ENCODE measurements at regions of chr11 and their contacts with region 1.

Region 1: DNA sequence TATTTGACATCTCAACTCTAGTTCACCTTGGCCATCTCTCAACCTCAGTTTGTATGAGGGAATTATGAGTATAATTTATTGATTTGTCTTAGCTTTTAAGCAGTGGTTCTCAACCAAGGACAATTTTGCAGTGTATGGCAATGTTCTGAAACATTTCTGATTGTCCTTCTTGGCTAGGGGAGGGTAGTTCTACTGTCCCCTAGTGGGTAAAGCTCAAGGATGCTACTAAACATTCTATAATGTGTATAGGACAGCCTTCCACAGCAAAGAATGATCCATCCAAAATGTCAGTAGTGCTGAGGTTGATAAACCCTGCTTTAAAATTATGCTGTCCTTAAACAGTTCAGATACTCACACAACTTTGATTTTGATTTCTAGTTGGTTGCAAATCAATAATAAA is 78.1 kb upstream of the ALKBH3 start:
- DNase-seq: peak in 1 of 2 experiments; percentile 22
- H3K4me3 ChIP-seq: no peak overlapping the region
- H3K4me3 Mint-ChIP-seq: no peak overlapping the region
- H3K27ac Mint-ChIP-seq: no peak overlapping the region
- H3K4me1 ChIP-seq: no peaks in the 10 kb centered on the region
- H3K4me1 Mint-ChIP-seq: no peaks in the 10 kb centered on the region
- H3K27me3 ChIP-seq: no peaks in the 10 kb centered on the region
- H3K27me3 Mint-ChIP-seq: no peaks in the 10 kb centered on the region
- CTCF ChIP-seq: peak; percentile 37 to 63

Region 2: GRCh38 chr11:43579171-43579918 is 223.2 kb before region 1 on chr11:
- CTCF ChIA-PET with region 1: no interaction called
- POLR2A ChIA-PET with region 1: no interaction called
- intact Hi-C with region 1: loop called (anchors 5 kb)
- DNase-seq: peak in 1 of 2 experiments; percentile 45
- H3K4me3 ChIP-seq: peak overlapping the region; percentile 60
- H3K4me3 Mint-ChIP-seq: peak overlapping the region; percentile 75
- H3K27ac Mint-ChIP-seq: no peak overlapping the region
- H3K4me1 ChIP-seq: no peaks in the 10 kb centered on the region; the same call in 1 of the 2 replicates
- H3K4me1 Mint-ChIP-seq: peaks cover 27% of the 10 kb centered on the region
- H3K27me3 ChIP-seq: peaks cover 6% of the 10 kb centered on the region
- H3K27me3 Mint-ChIP-seq: peaks cover 63% of the 10 kb centered on the region
- CTCF ChIP-seq: peak; percentile 40 to 65

Region 3: GRCh38 chr11:43602670-43603069 is 199.8 kb before region 1 on chr11:
- CTCF ChIA-PET with region 1: interaction called, 3 read pairs
- POLR2A ChIA-PET with region 1: interaction called, 12 read pairs
- intact Hi-C with region 1: no loop called
- DNase-seq: no peak
- H3K4me3 ChIP-seq: no peak overlapping the region
- H3K4me3 Mint-ChIP-seq: no peak overlapping the region
- H3K27ac Mint-ChIP-seq: no peak overlapping the region
- H3K4me1 ChIP-seq: no peaks in the 10 kb centered on the region
- H3K4me1 Mint-ChIP-seq: no peaks in the 10 kb centered on the region
- H3K27me3 ChIP-seq: no peaks in the 10 kb centered on the region
- H3K27me3 Mint-ChIP-seq: peaks cover 14% of the 10 kb centered on the region
- CTCF ChIP-seq: no peak

Region 4: DNA sequence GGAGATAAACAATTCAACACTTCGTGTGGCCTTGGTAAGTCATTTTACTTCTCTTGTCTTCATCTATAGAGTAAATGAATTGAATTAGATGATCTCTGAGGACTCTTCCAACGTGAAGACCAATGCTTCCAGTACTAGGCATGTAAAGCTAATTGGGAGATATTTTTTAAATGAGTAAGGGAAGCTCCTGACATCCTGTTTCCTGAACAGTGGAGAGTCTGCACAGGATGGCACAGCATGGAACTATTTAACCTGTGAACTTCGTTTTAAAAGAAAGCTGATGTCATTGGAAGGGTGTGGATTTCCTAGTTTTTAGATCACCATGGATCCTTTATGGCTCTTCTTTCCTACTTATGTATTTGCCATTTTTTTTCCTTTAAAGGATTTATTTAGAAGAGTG is 170.3 kb before region 1 on chr11:
- CTCF ChIA-PET with region 1: no interaction called
- POLR2A ChIA-PET with region 1: no interaction called
- intact Hi-C with region 1: no loop called
- DNase-seq: no peak
- H3K4me3 ChIP-seq: no peak overlapping the region
- H3K4me3 Mint-ChIP-seq: no peak overlapping the region
- H3K27ac Mint-ChIP-seq: no peak overlapping the region
- H3K4me1 ChIP-seq: no peaks in the 10 kb centered on the region
- H3K4me1 Mint-ChIP-seq: no peaks in the 10 kb centered on the region
- H3K27me3 ChIP-seq: no peaks in the 10 kb centered on the region; the same call in 1 of the 2 replicates
- H3K27me3 Mint-ChIP-seq: peaks cover 17% of the 10 kb centered on the region
- CTCF ChIP-seq: no peak

Region 5: GRCh38 chr11:43680521-43681400 is 121.7 kb before region 1 on chr11 and contains the start of gene HSD17B12:
- CTCF ChIA-PET with region 1: interaction called, 8 read pairs
- POLR2A ChIA-PET with region 1: no interaction called
- intact Hi-C with region 1: loop called (anchors 1 kb)
- DNase-seq: peak; percentile 100
- H3K4me3 ChIP-seq: peak within 1 kb of the TSS; percentile 85
- H3K4me3 Mint-ChIP-seq: peak within 1 kb of the TSS; percentile 94
- H3K27ac Mint-ChIP-seq: peak within 1 kb of the TSS; percentile 97
- H3K4me1 ChIP-seq: peaks cover 19% of the 10 kb centered on the region
- H3K4me1 Mint-ChIP-seq: peaks cover 11% of the 10 kb centered on the region
- H3K27me3 ChIP-seq: no peaks in the 10 kb centered on the region
- H3K27me3 Mint-ChIP-seq: no peaks in the 10 kb centered on the region
- CTCF ChIP-seq: no peak
- total RNA-seq, gene HSD17B12: 147 and 155 TPM in 2 replicates

Region 6: DNA sequence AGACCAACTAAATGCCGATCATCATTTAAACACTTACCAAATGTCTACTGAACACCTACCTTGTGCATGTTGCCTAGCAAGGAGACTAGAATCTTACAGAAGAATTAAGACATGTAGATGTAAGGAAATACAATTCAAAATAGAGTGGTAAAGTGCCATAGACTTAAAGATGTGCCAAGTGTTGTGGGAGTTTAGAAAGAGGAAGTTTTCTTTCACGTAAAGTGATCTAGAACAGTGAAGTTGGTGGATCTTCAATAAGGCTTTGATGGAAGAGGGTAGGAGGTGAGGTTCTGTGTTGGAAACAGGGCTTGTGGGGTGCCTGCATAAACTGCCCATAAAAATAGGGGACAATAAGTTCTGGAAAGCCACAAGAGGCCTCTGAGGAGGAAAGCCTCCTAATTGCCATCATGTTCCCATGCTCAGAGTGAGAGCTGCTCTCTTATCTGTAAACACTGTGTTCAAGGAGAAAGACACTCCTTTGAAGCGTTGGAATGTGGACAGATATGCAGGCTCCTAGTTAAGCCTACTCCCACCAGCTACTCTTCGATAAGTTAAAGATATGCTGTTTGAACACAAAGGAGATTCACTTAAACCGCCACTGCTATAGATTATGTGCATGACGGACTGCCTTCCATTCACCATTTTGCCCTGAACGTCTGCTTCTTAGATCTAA is 55.2 kb before region 1 on chr11:
- CTCF ChIA-PET with region 1: no interaction called
- POLR2A ChIA-PET with region 1: no interaction called
- intact Hi-C with region 1: loop called (anchors 2 kb)
- DNase-seq: peak; percentile 77 to 81
- H3K4me3 ChIP-seq: no peak overlapping the region
- H3K4me3 Mint-ChIP-seq: peak overlapping the region; percentile 65
- H3K27ac Mint-ChIP-seq: peak overlapping the region; percentile 96
- H3K4me1 ChIP-seq: peaks cover 57% of the 10 kb centered on the region
- H3K4me1 Mint-ChIP-seq: peaks cover 47% of the 10 kb centered on the region
- H3K27me3 ChIP-seq: no peaks in the 10 kb centered on the region
- H3K27me3 Mint-ChIP-seq: no peaks in the 10 kb centered on the region
- CTCF ChIP-seq: no peak

Region 7: DNA sequence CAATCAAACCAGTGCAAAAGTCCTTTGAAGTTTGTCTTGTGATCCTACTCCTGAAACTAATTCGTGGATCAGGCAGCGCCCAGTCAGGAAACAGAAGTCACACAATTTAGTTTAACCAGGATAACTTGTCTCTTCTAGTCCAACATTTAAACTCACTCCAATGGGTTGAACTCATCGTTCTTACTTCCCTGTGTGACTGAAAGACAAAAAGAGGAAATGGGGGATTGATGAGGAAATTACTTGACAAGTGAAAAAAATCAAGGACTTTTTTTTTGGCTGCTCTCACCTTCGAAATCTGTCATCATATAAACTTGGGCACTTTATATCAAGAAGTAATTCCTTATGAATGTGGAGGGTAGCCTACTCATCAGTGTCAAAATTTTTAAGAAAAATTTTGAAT is 43.6 kb before region 1 on chr11:
- CTCF ChIA-PET with region 1: no interaction called
- POLR2A ChIA-PET with region 1: no interaction called
- intact Hi-C with region 1: no loop called
- DNase-seq: no peak
- H3K4me3 ChIP-seq: no peak overlapping the region
- H3K4me3 Mint-ChIP-seq: no peak overlapping the region
- H3K27ac Mint-ChIP-seq: no peak overlapping the region
- H3K4me1 ChIP-seq: no peaks in the 10 kb centered on the region
- H3K4me1 Mint-ChIP-seq: no peaks in the 10 kb centered on the region
- H3K27me3 ChIP-seq: no peaks in the 10 kb centered on the region
- H3K27me3 Mint-ChIP-seq: no peaks in the 10 kb centered on the region
- CTCF ChIP-seq: no peak

Region 8: GRCh38 chr11:43880640-43881159 is 78.2 kb after region 1 on chr11 and contains the start of gene ALKBH3:
- CTCF ChIA-PET with region 1: no interaction called
- POLR2A ChIA-PET with region 1: no interaction called
- intact Hi-C with region 1: no loop called
- DNase-seq: peak; percentile 93 to 94
- H3K4me3 ChIP-seq: peak within 1 kb of the TSS; percentile 52
- H3K4me3 Mint-ChIP-seq: peak within 1 kb of the TSS; percentile 83
- H3K27ac Mint-ChIP-seq: peak within 1 kb of the TSS; percentile 73
- H3K4me1 ChIP-seq: 0 out of 2 replicates have a peak, but pooled peaks cover 6% of the 10 kb centered on the region
- H3K4me1 Mint-ChIP-seq: peaks cover 6% of the 10 kb centered on the region
- H3K27me3 ChIP-seq: no peaks in the 10 kb centered on the region
- H3K27me3 Mint-ChIP-seq: peaks cover 4% of the 10 kb centered on the region
- CTCF ChIP-seq: no peak
- total RNA-seq, gene ALKBH3: 36.8 and 42.4 TPM in 2 replicates

Region 9: GRCh38 chr11:44269369-44270351 is 467.2 kb after region 1 on chr11:
- CTCF ChIA-PET with region 1: no interaction called
- POLR2A ChIA-PET with region 1: no interaction called
- intact Hi-C with region 1: no loop called
- DNase-seq: peak in 1 of 2 experiments; percentile 17
- H3K4me3 ChIP-seq: no peak overlapping the region
- H3K4me3 Mint-ChIP-seq: no peak overlapping the region
- H3K27ac Mint-ChIP-seq: no peak overlapping the region
- H3K4me1 ChIP-seq: no peaks in the 10 kb centered on the region
- H3K4me1 Mint-ChIP-seq: no peaks in the 10 kb centered on the region
- H3K27me3 ChIP-seq: no peaks in the 10 kb centered on the region
- H3K27me3 Mint-ChIP-seq: no peaks in the 10 kb centered on the region
- CTCF ChIP-seq: no peak

Measured in Caco-2 (cell line).